T-cell (primary cell): ENCODE measurements at regions of chr22 and their contacts with region 1.

Region 1: DNA sequence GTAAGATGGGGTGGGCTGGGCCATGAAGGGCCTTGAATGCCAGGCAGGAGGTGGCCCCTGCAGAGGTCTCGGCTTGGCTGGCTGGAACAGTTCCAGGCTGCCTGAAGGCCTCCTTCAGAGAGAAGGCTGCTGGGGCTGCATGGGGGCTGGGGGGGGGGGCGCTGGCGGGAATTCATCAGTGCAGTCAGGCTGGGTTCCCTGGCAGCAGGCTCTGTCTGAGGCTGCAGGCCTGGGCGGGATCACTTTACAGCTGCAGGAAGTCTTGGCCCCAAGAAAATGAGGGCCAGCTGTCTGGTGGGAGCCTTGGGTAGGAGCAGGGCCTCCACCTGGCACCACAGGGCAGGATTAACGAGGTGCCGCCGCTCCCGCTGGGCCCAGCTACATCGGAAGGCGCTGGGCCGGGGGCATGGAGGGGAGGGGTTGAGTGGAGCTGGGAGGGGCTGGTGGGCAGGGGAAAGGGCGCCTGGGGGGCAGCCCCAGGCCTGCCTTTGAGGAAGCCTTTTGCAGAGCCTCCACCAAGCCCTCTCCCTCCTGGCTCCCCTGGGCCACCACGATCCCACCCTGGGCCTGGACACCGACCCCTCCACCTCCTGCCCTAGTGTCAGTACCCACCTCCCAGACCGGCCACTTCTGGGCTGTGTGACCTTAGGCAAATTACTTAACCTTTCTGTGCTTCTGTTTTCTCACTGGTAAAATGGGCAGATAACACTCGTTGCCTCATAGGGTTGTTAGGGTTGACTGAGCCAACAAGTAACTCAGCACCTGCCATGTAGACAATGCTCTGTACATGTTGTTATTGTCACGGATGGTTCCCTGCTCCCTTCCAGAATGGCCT is 31.0 kb upstream of the HMOX1 start:
- DNase-seq: peak in 1 of 35 experiments; percentile 24
- ATAC-seq: peak in 1 of 4 experiments; percentile 4
- H3K4me3 ChIP-seq: no peak overlapping the region
- H3K4me3 Mint-ChIP-seq: peak overlapping the region in 1 of 3 donors; percentile 86
- H3K27ac ChIP-seq: no peak overlapping the region
- H3K27ac Mint-ChIP-seq: no peak overlapping the region
- H3K4me1 ChIP-seq: peaks cover 0 to 28% of the 10 kb centered on the region in 2 experiments
- H3K4me1 Mint-ChIP-seq: peaks cover 23 to 28% (median 25%) of the 10 kb centered on the region in 3 donors
- H3K27me3 ChIP-seq: peaks cover 0 to 31% of the 10 kb centered on the region in 2 experiments
- H3K27me3 Mint-ChIP-seq: peaks cover 0 to 10% of the 10 kb centered on the region in 2 donors

Region 2: DNA sequence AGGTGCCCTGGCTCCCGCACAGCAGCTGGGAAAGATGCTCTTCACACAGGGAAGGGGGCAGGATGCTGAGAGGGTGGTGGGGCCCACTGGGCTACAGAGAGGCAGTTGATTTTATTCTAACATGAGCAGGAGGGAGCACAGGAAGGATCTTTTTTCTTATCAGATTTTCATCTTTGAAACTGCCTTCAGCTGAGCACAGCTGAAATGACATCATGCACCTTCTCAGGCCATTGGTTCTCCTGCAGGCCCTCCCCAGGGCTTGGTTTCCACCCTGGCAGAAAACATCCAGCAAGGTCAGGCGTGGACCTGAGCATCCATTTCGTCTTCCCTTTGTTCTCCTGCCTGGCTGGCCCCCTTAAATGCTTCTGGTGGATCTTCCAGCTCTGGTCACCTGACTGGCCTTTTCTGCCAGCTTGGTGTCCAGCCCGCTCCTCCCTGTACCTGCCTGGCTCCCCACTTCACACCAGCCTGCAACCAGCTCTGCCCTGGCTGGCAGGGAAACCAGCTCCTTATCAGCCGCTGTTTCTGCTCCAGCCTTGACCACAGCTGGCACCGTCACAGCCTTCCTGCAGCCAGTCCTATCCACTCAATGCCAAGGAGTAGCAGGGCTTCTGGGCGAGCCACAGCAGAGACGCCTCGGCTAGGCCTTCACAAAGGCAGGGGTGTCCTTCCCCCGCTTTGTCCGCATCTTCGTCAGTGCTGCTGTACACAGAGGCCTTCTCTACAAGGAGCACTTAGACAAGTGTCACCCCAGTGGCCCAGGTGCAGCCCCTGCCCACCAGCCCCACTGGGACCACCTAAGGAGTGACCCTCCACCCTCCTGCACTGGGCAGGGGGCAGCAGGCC is 13.8 kb before region 1 on chr22:
- CTCF ChIA-PET with region 1: no interaction called
- POLR2A ChIA-PET with region 1: no interaction called
- DNase-seq: no peak
- ATAC-seq: peak in 3 of 4 experiments; percentile 13 to 44 (median 40)
- H3K4me3 ChIP-seq: no peak overlapping the region
- H3K4me3 Mint-ChIP-seq: no peak overlapping the region
- H3K27ac ChIP-seq: no peak overlapping the region
- H3K27ac Mint-ChIP-seq: peak overlapping the region in 1 of 2 donors; percentile 27
- H3K4me1 ChIP-seq: peaks cover 4 to 20% of the 10 kb centered on the region in 2 experiments
- H3K4me1 Mint-ChIP-seq: peaks cover 8 to 27% (median 16%) of the 10 kb centered on the region in 3 donors
- H3K27me3 ChIP-seq: no peaks in the 10 kb centered on the region
- H3K27me3 Mint-ChIP-seq: no peaks in the 10 kb centered on the region

Region 3: GRCh38 chr22:35373781-35374180 is 23.9 kb after region 1 on chr22:
- CTCF ChIA-PET with region 1: no interaction called
- POLR2A ChIA-PET with region 1: interaction called in 1 of 2 experiments, 11 read pairs
- DNase-seq: no peak
- ATAC-seq: no peak
- H3K4me3 ChIP-seq: no peak overlapping the region
- H3K4me3 Mint-ChIP-seq: no peak overlapping the region
- H3K27ac ChIP-seq: no peak overlapping the region
- H3K27ac Mint-ChIP-seq: no peak overlapping the region
- H3K4me1 ChIP-seq: peaks cover 0 to 19% of the 10 kb centered on the region in 2 experiments
- H3K4me1 Mint-ChIP-seq: peaks cover 17 to 20% (median 19%) of the 10 kb centered on the region in 3 donors
- H3K27me3 ChIP-seq: peaks cover 0 to 11% of the 10 kb centered on the region in 2 experiments
- H3K27me3 Mint-ChIP-seq: peaks cover 0 to 3% of the 10 kb centered on the region in 2 donors

Region 4: DNA sequence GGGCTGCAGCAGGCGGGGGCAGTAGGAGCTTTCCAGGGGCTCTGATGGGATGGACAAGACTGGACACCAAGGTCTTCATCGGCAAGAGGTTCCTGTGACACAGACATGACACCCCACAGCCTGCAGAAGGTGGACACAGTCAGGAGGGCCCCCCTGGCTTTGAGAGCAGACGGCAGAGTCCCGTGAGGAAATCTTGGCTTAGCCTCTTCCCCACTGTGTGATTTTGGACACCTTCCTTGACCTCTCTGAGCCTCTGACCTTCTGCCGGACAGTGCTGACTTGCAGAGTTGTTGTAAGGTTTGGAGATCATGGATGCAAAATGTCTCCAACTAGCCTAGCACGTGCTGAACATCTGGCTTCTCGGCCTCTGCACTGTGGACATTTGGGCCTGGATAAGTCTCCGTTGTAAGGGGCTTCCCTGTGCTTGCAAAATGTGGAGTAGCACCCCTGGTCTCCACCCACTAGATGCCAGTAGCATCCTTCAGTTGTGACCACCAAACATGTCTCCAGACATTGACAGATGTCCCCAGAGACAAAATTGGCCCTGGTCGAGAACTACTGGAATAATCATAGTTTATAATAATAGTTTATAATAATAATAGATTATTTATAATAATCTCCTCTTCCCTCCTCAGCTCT is 104.6 kb after region 1 on chr22:
- CTCF ChIA-PET with region 1: no interaction called
- POLR2A ChIA-PET with region 1: no interaction called
- DNase-seq: no peak
- ATAC-seq: no peak
- H3K4me3 ChIP-seq: no peak overlapping the region
- H3K4me3 Mint-ChIP-seq: no peak overlapping the region
- H3K27ac ChIP-seq: no peak overlapping the region
- H3K27ac Mint-ChIP-seq: no peak overlapping the region
- H3K4me1 ChIP-seq: no peaks in the 10 kb centered on the region
- H3K4me1 Mint-ChIP-seq: no peaks in the 10 kb centered on the region
- H3K27me3 ChIP-seq: no peaks in the 10 kb centered on the region
- H3K27me3 Mint-ChIP-seq: no peaks in the 10 kb centered on the region